CD4-positive, alpha-beta memory T cell (primary cell): ENCODE measurements at regions of chr1 and their contacts with region 1.

Region 1: GRCh38 chr1:189463166-189463565 is 1014.5 kb downstream of the BRINP3 start:
- DNase-seq: no peak
- H3K4me3 ChIP-seq: no peak overlapping the region
- H3K4me3 Mint-ChIP-seq: no peak overlapping the region
- H3K27ac ChIP-seq: no peak overlapping the region
- H3K27ac Mint-ChIP-seq: no peak overlapping the region
- H3K4me1 ChIP-seq: no peaks in the 10 kb centered on the region
- H3K4me1 Mint-ChIP-seq: no peaks in the 10 kb centered on the region
- H3K27me3 ChIP-seq: no peaks in the 10 kb centered on the region
- H3K27me3 Mint-ChIP-seq: no peaks in the 10 kb centered on the region

Region 2: GRCh38 chr1:189323091-189323490 is 140.1 kb before region 1 on chr1:
- CTCF ChIA-PET with region 1: no interaction called
- POLR2A ChIA-PET with region 1: no interaction called
- intact Hi-C with region 1: loop called (anchors 5 kb)
- DNase-seq: no peak
- H3K4me3 ChIP-seq: no peak overlapping the region
- H3K4me3 Mint-ChIP-seq: no peak overlapping the region
- H3K27ac ChIP-seq: no peak overlapping the region
- H3K27ac Mint-ChIP-seq: no peak overlapping the region
- H3K4me1 ChIP-seq: no peaks in the 10 kb centered on the region
- H3K4me1 Mint-ChIP-seq: no peaks in the 10 kb centered on the region
- H3K27me3 ChIP-seq: no peaks in the 10 kb centered on the region
- H3K27me3 Mint-ChIP-seq: no peaks in the 10 kb centered on the region

Region 3: GRCh38 chr1:189434461-189434860 is 28.7 kb before region 1 on chr1:
- CTCF ChIA-PET with region 1: no interaction called
- POLR2A ChIA-PET with region 1: no interaction called
- intact Hi-C with region 1: no loop called
- DNase-seq: no peak
- H3K4me3 ChIP-seq: no peak overlapping the region
- H3K4me3 Mint-ChIP-seq: no peak overlapping the region
- H3K27ac ChIP-seq: no peak overlapping the region
- H3K27ac Mint-ChIP-seq: no peak overlapping the region
- H3K4me1 ChIP-seq: no peaks in the 10 kb centered on the region
- H3K4me1 Mint-ChIP-seq: no peaks in the 10 kb centered on the region
- H3K27me3 ChIP-seq: no peaks in the 10 kb centered on the region
- H3K27me3 Mint-ChIP-seq: no peaks in the 10 kb centered on the region